Aorta (tissue), 5 donors: ENCODE measurements at regions of chr15 and their contacts with region 1.

Region 1: DNA sequence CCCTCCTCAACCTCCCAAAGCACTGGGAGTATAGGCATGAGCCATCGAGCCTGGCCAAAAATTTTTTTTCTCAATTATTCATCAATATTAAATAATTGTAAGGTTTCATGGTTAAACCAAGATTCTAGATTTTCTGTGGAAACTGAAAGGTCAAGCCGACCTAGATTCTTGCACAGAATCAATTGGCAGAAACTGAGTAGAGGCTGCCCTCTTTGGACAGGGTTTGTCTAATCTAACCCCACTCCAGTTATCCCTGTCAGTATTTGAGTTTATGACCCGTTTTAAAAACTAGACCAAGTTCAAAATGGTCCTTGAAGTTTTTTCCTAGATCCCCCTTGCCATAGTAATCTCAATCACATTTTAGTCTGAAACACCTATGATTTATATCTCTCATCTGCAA is 8.6 kb upstream of the ADAM10 start:
- DNase-seq: no peak
- ATAC-seq: no peak
- H3K4me3 ChIP-seq: no peak overlapping the region
- H3K27ac ChIP-seq: no peak overlapping the region
- H3K4me1 ChIP-seq: no peaks in the 10 kb centered on the region
- H3K27me3 ChIP-seq: no peaks in the 10 kb centered on the region

Region 2: DNA sequence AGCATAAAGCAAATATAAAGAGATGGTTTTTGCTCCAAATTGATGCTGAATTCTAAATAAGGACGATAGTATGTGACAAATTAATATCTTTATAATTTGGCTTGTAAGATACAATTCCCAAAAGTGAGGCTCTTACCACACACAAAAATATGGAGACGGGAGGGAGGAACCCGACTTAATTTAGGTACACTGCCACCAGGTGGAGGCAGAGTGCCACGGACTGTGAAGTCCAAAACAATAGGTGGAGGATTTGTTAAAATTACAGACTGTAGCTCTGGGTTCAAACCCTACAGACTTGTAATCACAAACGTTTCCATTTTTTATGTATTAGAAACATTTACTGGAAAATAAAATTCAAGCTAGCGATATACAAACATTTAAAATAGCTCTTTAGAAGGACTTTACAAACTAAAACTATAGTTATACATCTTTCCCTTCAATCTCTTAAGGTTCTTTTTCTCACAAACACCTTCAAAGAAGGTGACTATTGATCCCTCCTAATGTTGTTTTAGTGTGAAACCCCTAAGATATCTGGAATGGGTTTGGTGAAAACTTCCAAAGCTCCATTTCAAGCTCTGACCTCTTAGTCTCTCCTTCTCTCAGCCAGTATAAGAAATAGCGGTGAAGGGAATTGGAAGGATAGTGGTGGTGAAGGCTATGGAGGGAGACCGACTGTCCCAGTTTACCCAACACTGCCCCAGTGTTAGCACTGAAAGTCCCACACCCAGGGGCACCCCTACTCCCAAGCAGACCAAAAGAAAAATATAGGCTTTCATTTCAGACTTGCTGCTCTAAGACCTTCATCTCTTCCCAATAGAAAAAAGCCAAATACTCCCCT is 530.2 kb before region 1 on chr15:
- intact Hi-C with region 1: loop called (anchors 5 kb)
- DNase-seq: peak; percentile 84 to 88
- ATAC-seq: peak; percentile 69
- H3K4me3 ChIP-seq: no peak overlapping the region
- H3K27ac ChIP-seq: no peak overlapping the region
- H3K4me1 ChIP-seq: peaks cover 3 to 4% of the 10 kb centered on the region in 2 donors
- H3K27me3 ChIP-seq: no peaks in the 10 kb centered on the region

Region 3: DNA sequence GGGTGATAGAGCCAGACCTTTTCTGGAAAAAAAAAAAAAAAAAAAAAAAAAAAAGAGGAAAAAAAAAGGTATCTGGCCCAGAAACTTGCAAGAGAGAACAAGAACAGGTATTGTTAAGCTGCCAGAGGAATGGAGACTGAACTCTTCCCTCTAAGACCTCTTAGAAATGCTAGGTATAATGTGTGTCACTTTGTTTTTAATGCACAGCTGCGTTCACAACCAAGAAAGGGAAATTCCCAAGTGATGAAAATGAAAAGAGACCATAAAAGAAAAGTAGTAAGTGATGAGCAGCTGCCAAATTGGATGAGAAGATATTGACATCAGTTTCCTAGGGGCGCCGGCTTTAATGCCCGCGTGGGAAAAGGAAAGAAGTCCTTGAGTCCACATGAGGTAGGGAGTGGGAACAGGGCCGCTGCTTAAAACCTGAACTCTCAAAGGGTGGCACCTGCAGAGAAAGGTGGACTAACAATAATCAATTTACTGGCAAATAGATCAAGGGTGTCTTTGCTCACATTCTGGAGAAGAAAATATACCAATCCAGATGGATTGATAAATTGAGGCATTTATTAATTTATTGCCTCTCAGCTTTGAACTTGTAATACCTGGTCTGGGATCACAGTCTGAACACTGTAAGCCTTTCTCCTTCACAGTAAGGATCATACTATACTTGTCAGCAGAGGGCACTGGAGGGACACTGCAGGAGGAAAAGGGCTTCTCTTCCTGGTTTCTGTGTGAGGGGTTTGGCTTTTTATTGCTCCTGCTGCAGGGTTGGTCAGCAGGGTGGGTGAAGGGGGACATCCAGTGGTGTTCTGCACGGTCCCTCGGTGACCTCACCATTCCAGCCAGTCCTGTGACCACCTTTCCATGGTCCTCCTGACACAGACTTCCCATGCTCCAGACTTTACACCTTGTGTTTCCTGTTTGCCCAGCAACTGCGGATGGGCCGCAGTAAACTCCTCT is 488.4 kb before region 1 on chr15:
- intact Hi-C with region 1: loop called in 1 of 2 experiments (anchors 5 kb)
- DNase-seq: no peak
- ATAC-seq: peak; percentile 65
- H3K4me3 ChIP-seq: no peak overlapping the region
- H3K27ac ChIP-seq: no peak overlapping the region
- H3K4me1 ChIP-seq: no peaks in the 10 kb centered on the region
- H3K27me3 ChIP-seq: peaks cover 0 to 2% of the 10 kb centered on the region in 2 donors

Region 4: GRCh38 chr15:59741274-59741906 is 983.3 kb after region 1 on chr15:
- intact Hi-C with region 1: no loop called
- DNase-seq: no peak
- ATAC-seq: no peak
- H3K4me3 ChIP-seq: no peak overlapping the region
- H3K27ac ChIP-seq: no peak overlapping the region
- H3K4me1 ChIP-seq: no peaks in the 10 kb centered on the region
- H3K27me3 ChIP-seq: no peaks in the 10 kb centered on the region